Heart right ventricle (tissue), 16 donors: ENCODE measurements at regions of chr18 and their contacts with region 1.

Region 1: GRCh38 chr18:39523281-39523680 is 1957.7 kb upstream of the CELF4 start:
- DNase-seq: no peak
- ATAC-seq: no peak
- H3K4me3 ChIP-seq: no peak overlapping the region
- H3K27ac ChIP-seq: no peak overlapping the region
- H3K4me1 ChIP-seq: no peaks in the 10 kb centered on the region
- H3K27me3 ChIP-seq: no peaks in the 10 kb centered on the region
- CTCF ChIP-seq: no peak

Region 2: GRCh38 chr18:37997695-37998094 is 1525.6 kb before region 1 on chr18:
- intact Hi-C with region 1: no loop called
- DNase-seq: no peak
- ATAC-seq: no peak
- H3K4me3 ChIP-seq: no peak overlapping the region
- H3K27ac ChIP-seq: no peak overlapping the region
- H3K4me1 ChIP-seq: no peaks in the 10 kb centered on the region
- H3K27me3 ChIP-seq: no peaks in the 10 kb centered on the region
- CTCF ChIP-seq: no peak

Region 3: DNA sequence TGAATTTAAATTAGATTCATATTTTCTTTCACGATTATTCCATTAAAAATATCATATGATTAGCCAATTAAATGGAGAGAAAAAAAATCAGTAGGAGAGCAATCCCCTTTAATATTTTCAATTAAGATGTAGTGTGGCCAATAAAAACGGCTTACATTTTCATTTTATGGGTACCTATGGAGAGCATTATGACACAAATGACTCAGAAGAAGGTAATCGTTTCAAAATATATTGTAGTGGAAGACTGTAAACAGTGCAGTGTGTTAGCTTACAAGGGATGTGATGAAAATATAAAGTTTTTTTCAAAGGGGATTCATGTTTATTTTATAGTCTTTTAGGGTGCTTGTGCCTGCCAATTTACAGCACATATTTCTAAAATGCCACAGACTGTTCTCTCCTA is 450.3 kb before region 1 on chr18:
- intact Hi-C with region 1: no loop called
- DNase-seq: no peak
- ATAC-seq: no peak
- H3K4me3 ChIP-seq: no peak overlapping the region
- H3K27ac ChIP-seq: no peak overlapping the region
- H3K4me1 ChIP-seq: no peaks in the 10 kb centered on the region
- H3K27me3 ChIP-seq: no peaks in the 10 kb centered on the region
- CTCF ChIP-seq: no peak

Region 4: GRCh38 chr18:39350945-39351344 is 172.3 kb before region 1 on chr18:
- intact Hi-C with region 1: loop called in 1 of 10 experiments (anchors 10 kb)
- DNase-seq: no peak
- ATAC-seq: no peak
- H3K4me3 ChIP-seq: no peak overlapping the region
- H3K27ac ChIP-seq: no peak overlapping the region
- H3K4me1 ChIP-seq: no peaks in the 10 kb centered on the region
- H3K27me3 ChIP-seq: no peaks in the 10 kb centered on the region
- CTCF ChIP-seq: no peak

Region 5: DNA sequence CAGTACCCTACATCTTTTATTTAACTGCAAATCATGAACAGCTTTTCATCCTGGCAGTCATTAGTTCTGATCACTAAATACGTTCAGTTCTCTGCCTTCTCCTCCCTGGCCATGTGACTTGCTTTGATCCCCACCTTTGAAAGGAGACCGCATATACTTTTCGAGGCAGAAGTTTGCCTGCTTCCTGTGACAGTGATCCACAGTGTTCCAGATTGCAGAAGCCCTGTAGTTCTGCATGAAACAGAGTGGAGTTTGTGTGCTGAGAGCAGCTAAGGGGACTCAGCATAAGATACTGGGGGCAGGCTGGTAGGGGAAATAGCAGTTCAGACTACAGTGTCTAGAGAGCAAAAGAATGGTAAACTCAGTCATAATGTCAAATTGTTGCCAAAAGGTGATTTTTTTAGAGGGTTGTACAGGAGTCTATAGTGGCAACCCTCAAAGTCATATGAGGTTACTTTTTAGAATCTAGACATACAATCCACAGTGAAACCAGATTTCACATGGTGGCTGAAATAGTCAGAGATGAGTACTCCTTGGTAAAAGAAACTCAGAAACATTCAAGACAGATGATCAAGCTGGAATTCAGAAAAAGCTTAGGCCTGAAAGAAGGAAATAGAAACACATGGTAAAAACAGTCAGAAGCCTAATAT is 157.3 kb before region 1 on chr18:
- intact Hi-C with region 1: no loop called
- DNase-seq: no peak
- ATAC-seq: no peak
- H3K4me3 ChIP-seq: no peak overlapping the region
- H3K27ac ChIP-seq: no peak overlapping the region
- H3K4me1 ChIP-seq: no peaks in the 10 kb centered on the region
- H3K27me3 ChIP-seq: no peaks in the 10 kb centered on the region
- CTCF ChIP-seq: no peak

Region 6: GRCh38 chr18:39389800-39390379 is 133.4 kb before region 1 on chr18:
- intact Hi-C with region 1: loop called in 1 of 10 experiments (anchors 10 kb)
- DNase-seq: no peak
- ATAC-seq: no peak
- H3K4me3 ChIP-seq: no peak overlapping the region
- H3K27ac ChIP-seq: no peak overlapping the region
- H3K4me1 ChIP-seq: no peaks in the 10 kb centered on the region
- H3K27me3 ChIP-seq: no peaks in the 10 kb centered on the region
- CTCF ChIP-seq: no peak